ENCODE measurements at regions of chr16 and their contacts with region 1.

Region 1: GRCh38 chr16:24504472-24505345 is 34.7 kb upstream of the RBBP6 start:
- DNase-seq: peak; percentile 41
- ATAC-seq: peak; percentile 81 to 89

Region 2: GRCh38 chr16:23729503-23730424 is 774.9 kb before region 1 on chr16:
- intact Hi-C with region 1: loop called in 1 of 2 experiments (anchors 10 kb)
- DNase-seq: no peak
- ATAC-seq: peak in 1 of 2 donors; percentile 57

Region 3: GRCh38 chr16:23803591-23804123 is 701.1 kb before region 1 on chr16:
- intact Hi-C with region 1: loop called in 1 of 2 experiments (anchors 5 kb)
- DNase-seq: peak; percentile 42
- ATAC-seq: peak in 1 of 2 donors; percentile 65

Region 4: DNA sequence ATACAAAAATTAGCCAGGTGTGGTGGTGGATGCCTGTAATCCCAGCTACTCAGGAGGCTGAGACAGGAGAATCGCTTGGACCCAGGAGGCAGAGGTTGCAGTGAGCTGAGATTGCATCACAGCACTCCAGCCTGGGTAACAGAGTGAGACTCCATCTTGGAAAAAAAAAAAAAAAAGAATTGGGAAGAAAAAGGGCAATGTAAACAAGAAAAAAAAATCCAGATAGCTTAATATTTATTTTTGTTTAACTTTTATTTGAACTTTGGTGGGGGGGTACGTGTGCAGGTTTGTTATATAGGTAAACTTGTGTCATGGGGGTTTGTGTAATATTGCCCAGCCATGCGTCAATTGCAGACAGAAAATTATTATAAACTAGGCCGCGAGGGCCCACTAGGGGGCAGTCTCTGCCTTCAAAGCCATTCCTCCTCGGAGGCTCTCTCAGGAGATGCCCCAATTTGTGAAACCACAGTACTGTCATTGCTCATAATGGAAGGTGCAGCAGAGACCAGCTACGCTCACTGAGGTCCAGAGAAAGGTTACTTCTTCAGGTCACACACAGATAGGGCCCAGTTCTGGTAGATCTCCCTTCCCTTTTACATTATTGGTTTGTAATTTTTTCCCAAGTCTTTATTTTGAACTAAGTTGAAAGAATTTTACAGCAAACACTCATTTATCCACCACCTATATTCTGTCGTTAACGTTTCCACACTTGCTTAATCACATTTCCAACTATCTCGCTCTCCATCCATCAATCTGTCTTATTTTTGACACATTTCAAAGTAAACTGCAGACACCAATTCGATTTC is 462.7 kb before region 1 on chr16:
- intact Hi-C with region 1: loop called (anchors 1 to 2 kb)
- DNase-seq: peak; percentile 53
- ATAC-seq: peak; percentile 41 to 70

Measured in left cardiac atrium (tissue), 4 donors.